ENCODE measurements at regions of chr1 and their contacts with region 1.

Region 1: GRCh38 chr1:15323351-15323988 is 76.4 kb downstream of the FHAD1 start:
- DNase-seq: no peak
- H3K4me3 ChIP-seq: no peak overlapping the region
- H3K27ac ChIP-seq: no peak overlapping the region
- H3K4me1 ChIP-seq: peaks cover 5 to 18% (median 12%) of the 10 kb centered on the region in 4 donors
- H3K27me3 ChIP-seq: no peaks in the 10 kb centered on the region
- CTCF ChIP-seq: peak in 2 of 3 experiments; percentile 97 to 99
- EP300 ChIP-seq: no peak
- POLR2A ChIP-seq: no peak

Region 2: DNA sequence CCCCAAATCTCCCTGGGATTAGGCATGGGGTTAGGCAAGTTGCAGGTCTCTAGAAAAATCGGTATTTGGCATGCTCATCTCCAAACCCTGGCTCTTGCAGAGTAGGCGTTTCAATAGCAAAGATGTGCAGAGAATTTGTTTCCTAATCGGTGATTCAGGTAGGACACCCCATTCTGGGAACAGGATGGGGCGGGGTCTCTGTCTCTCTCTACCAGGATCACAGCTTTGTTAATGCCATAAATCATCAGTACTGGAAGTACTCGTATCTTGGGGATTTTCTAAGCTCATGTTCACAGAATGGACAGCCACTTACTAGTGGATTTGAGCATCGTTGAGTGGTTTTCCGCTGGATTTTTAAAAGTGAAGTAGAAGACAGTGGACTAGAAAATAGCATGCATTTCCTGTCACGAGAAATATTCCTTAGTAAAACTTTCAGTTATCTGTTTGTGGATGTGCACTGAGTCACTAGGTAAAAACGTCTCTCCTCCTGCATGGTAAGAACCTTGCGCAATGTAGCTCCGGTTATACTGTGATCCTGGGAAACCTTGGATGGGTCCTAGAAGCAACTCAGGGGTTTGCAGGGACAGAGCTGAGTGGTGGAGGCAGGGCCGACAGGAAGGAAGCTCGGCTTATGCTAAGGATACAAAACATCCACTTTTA is 164.8 kb before region 1 on chr1:
- intact Hi-C with region 1: no loop called
- DNase-seq: no peak
- H3K4me3 ChIP-seq: peak overlapping the region in 1 of 4 donors; percentile 3
- H3K27ac ChIP-seq: peak overlapping the region; percentile 47 to 69 (median 52)
- H3K4me1 ChIP-seq: peaks cover 17 to 72% (median 61%) of the 10 kb centered on the region in 4 donors
- H3K27me3 ChIP-seq: peaks cover 0 to 5% (median 0%) of the 10 kb centered on the region in 4 donors
- CTCF ChIP-seq: no peak
- EP300 ChIP-seq: no peak
- POLR2A ChIP-seq: no peak

Region 3: DNA sequence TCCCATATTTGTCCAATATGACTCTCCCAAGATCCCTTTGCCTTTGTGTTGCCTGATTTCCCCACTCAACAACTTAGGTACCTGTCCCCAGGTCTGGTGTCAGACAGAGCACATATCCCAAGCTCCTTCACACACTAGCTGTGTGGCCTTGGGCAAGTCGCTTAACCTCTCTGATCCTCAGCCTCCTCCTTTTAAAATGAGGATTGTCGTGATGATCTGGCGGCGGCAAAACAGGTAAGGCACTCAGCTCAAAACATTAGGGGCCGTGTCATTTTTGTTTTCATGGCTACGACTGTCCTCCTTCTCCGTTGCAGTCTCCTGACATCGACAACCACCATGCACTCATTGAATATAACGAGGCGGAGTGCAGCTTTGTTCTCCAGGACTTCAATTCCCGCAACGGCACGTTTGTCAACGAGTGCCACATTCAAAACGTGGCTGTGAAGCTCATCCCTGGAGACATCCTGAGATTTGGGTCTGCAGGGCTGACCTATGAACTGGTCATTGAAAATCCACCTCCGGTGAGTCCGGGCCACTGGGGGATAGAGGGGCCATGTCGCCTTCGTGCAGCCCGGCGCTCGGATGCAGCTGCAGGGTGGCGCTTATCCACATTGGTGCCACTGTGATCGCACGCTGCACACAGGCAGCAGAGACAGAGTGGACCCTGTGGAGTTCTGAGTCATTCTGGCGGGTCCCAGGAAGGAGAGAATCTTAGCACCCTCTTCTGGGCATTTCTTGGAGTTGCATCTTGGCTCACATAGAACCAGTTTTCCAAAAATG is 51.3 kb before region 1 on chr1:
- intact Hi-C with region 1: no loop called
- DNase-seq: no peak
- H3K4me3 ChIP-seq: no peak overlapping the region
- H3K27ac ChIP-seq: no peak overlapping the region
- H3K4me1 ChIP-seq: peaks cover 3 to 10% (median 8%) of the 10 kb centered on the region in 4 donors
- H3K27me3 ChIP-seq: no peaks in the 10 kb centered on the region
- CTCF ChIP-seq: peak; percentile 83 to 88 (median 86)
- EP300 ChIP-seq: no peak
- POLR2A ChIP-seq: no peak

Region 4: DNA sequence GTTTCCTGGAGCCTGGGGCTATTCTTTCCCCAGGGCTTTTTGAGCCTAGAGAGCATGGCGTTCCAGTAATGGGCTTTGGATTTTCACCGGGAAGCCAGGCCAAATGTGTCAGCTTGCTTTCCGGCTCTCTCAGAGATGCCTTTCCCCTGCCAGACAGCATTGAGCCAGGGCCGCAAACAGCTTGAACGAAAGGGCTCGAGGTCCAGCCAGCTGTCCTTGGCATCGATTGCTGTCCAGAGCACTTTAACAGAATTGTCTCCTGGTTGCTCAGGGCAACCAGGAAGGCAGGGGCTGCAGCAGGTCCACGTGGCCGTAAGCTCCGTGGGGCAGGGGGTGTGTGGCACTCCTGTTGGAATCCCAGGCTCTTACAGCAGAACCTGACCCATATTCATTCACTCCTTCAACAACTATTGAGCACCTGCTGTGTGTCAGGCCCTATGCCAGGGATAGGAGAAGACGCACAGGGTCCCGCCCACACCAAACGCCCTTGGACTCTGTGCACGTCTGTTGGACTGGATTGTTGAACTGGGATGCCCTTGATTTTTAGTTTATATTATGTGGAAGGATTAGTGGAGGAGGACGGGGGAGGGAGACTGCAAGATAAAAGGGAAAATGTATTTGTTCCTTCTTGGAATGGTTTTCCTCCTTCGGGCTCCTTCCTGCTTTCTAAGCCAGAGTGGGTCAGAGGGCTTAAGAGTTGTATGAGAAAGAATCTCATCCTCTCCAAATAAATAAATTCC is 47.5 kb after region 1 on chr1:
- intact Hi-C with region 1: loop called (anchors 10 kb)
- DNase-seq: peak; percentile 93
- H3K4me3 ChIP-seq: no peak overlapping the region
- H3K27ac ChIP-seq: peak overlapping the region; percentile 50 to 79 (median 63)
- H3K4me1 ChIP-seq: peaks cover 11 to 22% (median 19%) of the 10 kb centered on the region in 4 donors
- H3K27me3 ChIP-seq: no peaks in the 10 kb centered on the region
- CTCF ChIP-seq: no peak
- EP300 ChIP-seq: peak; percentile 16
- POLR2A ChIP-seq: no peak

Region 5: DNA sequence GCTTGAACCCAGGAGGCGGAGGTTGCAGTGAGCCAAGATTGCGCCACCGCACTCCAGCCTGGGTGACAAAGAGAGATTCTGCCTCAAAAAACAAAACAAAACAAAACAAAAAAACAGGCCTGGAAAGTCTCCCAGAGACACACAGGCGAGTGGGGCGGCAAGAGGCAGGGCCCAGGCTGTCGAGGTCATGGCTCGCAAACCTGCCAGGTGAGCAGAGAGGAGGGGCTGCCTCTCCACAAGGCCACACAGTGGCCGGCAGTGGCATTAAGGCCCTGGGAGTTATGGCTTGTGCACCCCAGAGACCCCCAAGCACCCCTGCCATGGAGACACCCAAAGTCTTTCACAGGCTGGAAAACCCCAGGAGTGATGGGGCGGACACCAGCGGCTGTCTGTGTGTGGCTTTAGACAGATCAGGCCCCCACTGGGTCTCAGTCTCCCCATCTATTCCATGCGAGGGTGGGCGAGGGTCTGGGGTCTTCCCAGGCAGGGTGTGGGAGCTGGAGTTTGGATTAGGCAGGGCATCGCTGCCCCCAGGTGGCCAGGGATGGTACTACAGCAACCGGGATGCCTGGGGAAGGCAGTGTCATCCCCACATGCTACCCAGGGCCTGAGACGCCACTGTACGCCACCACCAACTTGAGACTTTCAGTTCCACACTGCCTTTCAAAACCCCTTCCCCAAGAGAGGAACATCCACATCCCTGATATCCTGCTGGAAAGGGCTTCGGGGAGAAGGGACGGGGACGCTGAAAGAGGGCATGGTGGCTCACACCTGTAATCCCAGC is 107.5 kb after region 1 on chr1:
- intact Hi-C with region 1: loop called (anchors 1 kb)
- DNase-seq: no peak
- H3K4me3 ChIP-seq: no peak overlapping the region
- H3K27ac ChIP-seq: no peak overlapping the region
- H3K4me1 ChIP-seq: peaks cover 17 to 28% (median 23%) of the 10 kb centered on the region in 4 donors
- H3K27me3 ChIP-seq: no peaks in the 10 kb centered on the region
- CTCF ChIP-seq: peak; percentile 93 to 98 (median 95)
- EP300 ChIP-seq: no peak
- POLR2A ChIP-seq: no peak

Region 6: DNA sequence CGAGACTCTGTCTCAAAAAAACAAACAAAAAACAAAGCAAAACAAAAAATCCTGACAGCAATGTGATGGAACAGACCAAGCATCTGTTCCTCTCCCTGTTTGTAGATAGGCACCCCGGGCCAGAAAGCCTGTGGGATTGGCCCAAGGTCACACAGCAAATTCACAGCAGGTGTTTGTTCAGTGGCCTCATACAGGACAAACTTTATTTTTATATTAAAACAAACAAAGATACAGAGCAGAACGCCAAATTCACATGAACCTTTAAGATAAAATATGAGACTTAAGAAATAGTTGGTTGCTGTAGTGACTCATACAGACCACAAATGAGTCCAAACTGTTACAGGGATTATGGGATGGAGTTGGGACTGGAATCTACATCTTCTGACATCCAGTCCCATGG is 130.8 kb after region 1 on chr1:
- intact Hi-C with region 1: no loop called
- DNase-seq: no peak
- H3K4me3 ChIP-seq: no peak overlapping the region
- H3K27ac ChIP-seq: peak overlapping the region in 2 of 4 donors; percentile 2 to 57
- H3K4me1 ChIP-seq: peaks cover 0 to 12% (median 6%) of the 10 kb centered on the region in 4 donors
- H3K27me3 ChIP-seq: no peaks in the 10 kb centered on the region
- CTCF ChIP-seq: no peak
- EP300 ChIP-seq: no peak
- POLR2A ChIP-seq: no peak